ENCODE measurements at regions of chr19 and their contacts with region 1.

Region 1: GRCh38 chr19:42325273-42325895 is at the start of gene MEGF8:
- DNase-seq: peak; percentile 86 to 99 (median 97)
- ATAC-seq: peak; percentile 96
- H3K4me3 ChIP-seq: peak within 1 kb of the TSS; percentile 95
- H3K4me3 Mint-ChIP-seq: peak within 1 kb of the TSS; percentile 89 to 96 (median 94)
- H3K27ac ChIP-seq: peak within 1 kb of the TSS; percentile 84
- H3K27ac Mint-ChIP-seq: peak within 1 kb of the TSS; percentile 51 to 93 (median 83)
- H3K4me1 ChIP-seq: peaks cover 6 to 7% of the 10 kb centered on the region in 2 donors
- H3K4me1 Mint-ChIP-seq: peaks cover 13 to 29% (median 22%) of the 10 kb centered on the region in 7 donors
- H3K27me3 ChIP-seq: peaks cover 0 to 4% of the 10 kb centered on the region in 2 donors
- H3K27me3 Mint-ChIP-seq: peaks cover 6 to 33% (median 16%) of the 10 kb centered on the region in 5 donors
- total RNA-seq, gene MEGF8: 6.7 to 9.3 (median 8.6) TPM

Region 2: GRCh38 chr19:40348125-40348913 is 1977.1 kb before region 1 on chr19 and contains the starts of genes C19orf47 and PLD3:
- CTCF ChIA-PET with region 1: no interaction called
- POLR2A ChIA-PET with region 1: no interaction called
- intact Hi-C with region 1: loop called in 1 of 2 experiments (anchors 5 kb)
- DNase-seq: peak; percentile 92 to 99 (median 97)
- ATAC-seq: peak; percentile 97
- H3K4me3 ChIP-seq: peak within 1 kb of the TSS; percentile 61
- H3K4me3 Mint-ChIP-seq: peak within 1 kb of the TSS; percentile 83 to 99 (median 96)
- H3K27ac ChIP-seq: peak within 1 kb of the TSS; percentile 86
- H3K27ac Mint-ChIP-seq: peak within 1 kb of the TSS; percentile 81 to 98 (median 93)
- H3K4me1 ChIP-seq: peaks cover 7 to 14% of the 10 kb centered on the region in 2 donors
- H3K4me1 Mint-ChIP-seq: peaks cover 20 to 51% (median 44%) of the 10 kb centered on the region in 7 donors
- H3K27me3 ChIP-seq: no peaks in the 10 kb centered on the region
- H3K27me3 Mint-ChIP-seq: peaks cover 0 to 2% (median 0%) of the 10 kb centered on the region in 5 donors
- total RNA-seq, gene C19orf47: 12.6 to 20.3 (median 15.8) TPM
- total RNA-seq, gene PLD3: 75.4 to 137 (median 114) TPM

Region 3: DNA sequence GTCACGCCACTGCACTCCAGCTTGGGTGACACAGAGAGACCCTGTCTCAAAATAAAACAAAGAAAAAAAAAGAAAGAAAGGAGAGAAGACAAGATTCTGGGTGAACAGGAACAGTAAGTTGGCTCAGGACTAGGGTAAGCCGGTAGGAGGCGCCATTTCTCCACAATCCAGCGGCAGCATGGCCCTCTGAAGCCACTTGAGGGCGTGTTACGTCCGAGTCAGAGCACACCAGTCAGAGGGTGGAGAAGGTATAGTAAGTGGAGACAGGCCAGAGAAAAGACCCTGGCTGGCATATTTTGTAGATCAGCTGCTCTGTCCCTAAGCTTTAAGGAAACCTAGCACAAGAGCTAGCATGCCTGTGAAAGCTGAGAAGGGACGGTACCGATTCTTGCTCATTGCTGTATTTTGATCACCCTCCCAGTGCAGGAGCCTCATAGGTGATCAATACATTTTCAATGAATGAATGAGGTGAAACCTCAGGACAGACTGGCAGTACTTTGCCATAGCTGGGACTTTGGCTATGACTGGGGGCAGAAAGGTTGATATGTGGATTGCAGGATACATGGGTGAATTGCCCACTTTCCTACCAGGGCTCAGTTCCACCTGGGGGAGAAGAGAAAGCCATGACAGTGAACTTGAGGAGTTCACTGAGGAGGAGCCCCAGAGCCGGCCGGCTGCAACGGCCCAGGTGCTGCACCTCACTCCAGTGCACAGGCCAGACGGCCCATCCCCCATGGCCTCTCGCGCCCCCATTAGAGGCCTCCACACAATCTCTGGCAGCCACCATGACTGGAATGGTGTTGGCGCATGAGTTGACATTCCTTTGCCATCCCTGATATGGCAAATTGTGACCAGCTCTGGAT is 216.6 kb before region 1 on chr19:
- CTCF ChIA-PET with region 1: no interaction called
- POLR2A ChIA-PET with region 1: no interaction called
- intact Hi-C with region 1: loop called (anchors 1 kb)
- DNase-seq: peak; percentile 73 to 89 (median 83)
- ATAC-seq: peak; percentile 100
- H3K4me3 ChIP-seq: no peak overlapping the region
- H3K4me3 Mint-ChIP-seq: no peak overlapping the region
- H3K27ac ChIP-seq: no peak overlapping the region
- H3K27ac Mint-ChIP-seq: peak overlapping the region in 6 of 9 donors; percentile 28 to 60 (median 34)
- H3K4me1 ChIP-seq: no peaks in the 10 kb centered on the region
- H3K4me1 Mint-ChIP-seq: peaks cover 6 to 44% (median 13%) of the 10 kb centered on the region in 7 donors
- H3K27me3 ChIP-seq: no peaks in the 10 kb centered on the region
- H3K27me3 Mint-ChIP-seq: no peaks in the 10 kb centered on the region

Region 4: GRCh38 chr19:42254989-42255765 is 70.2 kb before region 1 on chr19 and contains the start of gene ERF:
- CTCF ChIA-PET with region 1: no interaction called
- POLR2A ChIA-PET with region 1: no interaction called
- intact Hi-C with region 1: loop called in 1 of 2 experiments (anchors 1 kb)
- DNase-seq: peak; percentile 90 to 98 (median 94)
- ATAC-seq: peak; percentile 90
- H3K4me3 ChIP-seq: peak within 1 kb of the TSS; percentile 96
- H3K4me3 Mint-ChIP-seq: peak within 1 kb of the TSS; percentile 42 to 99 (median 77)
- H3K27ac ChIP-seq: peak within 1 kb of the TSS; percentile 99
- H3K27ac Mint-ChIP-seq: peak within 1 kb of the TSS in 8 of 9 donors; percentile 43 to 92 (median 82)
- H3K4me1 ChIP-seq: peaks cover 20 to 29% of the 10 kb centered on the region in 2 donors
- H3K4me1 Mint-ChIP-seq: peaks cover 20 to 37% (median 30%) of the 10 kb centered on the region in 7 donors
- H3K27me3 ChIP-seq: no peaks in the 10 kb centered on the region
- H3K27me3 Mint-ChIP-seq: peaks cover 0 to 10% (median 0%) of the 10 kb centered on the region in 5 donors
- total RNA-seq, gene ERF: 42.5 to 105 (median 51.8) TPM

Region 5: GRCh38 chr19:42301656-42302203 is 23.7 kb before region 1 on chr19 and contains the start of gene PRR19:
- CTCF ChIA-PET with region 1: no interaction called
- POLR2A ChIA-PET with region 1: interaction called, 6 read pairs
- intact Hi-C with region 1: loop called (anchors 1 kb)
- DNase-seq: peak in 1 of 9 donors; percentile 21
- ATAC-seq: peak; percentile 8
- H3K4me3 ChIP-seq: peak within 1 kb of the TSS; percentile 85
- H3K4me3 Mint-ChIP-seq: peak within 1 kb of the TSS; percentile 83 to 92 (median 89)
- H3K27ac ChIP-seq: peak within 1 kb of the TSS; percentile 71
- H3K27ac Mint-ChIP-seq: peak within 1 kb of the TSS; percentile 64 to 94 (median 88)
- H3K4me1 ChIP-seq: peaks cover 11 to 16% of the 10 kb centered on the region in 2 donors
- H3K4me1 Mint-ChIP-seq: peaks cover 11 to 30% (median 23%) of the 10 kb centered on the region in 7 donors
- H3K27me3 ChIP-seq: no peaks in the 10 kb centered on the region
- H3K27me3 Mint-ChIP-seq: no peaks in the 10 kb centered on the region
- total RNA-seq, gene PRR19: 0.32 to 0.68 (median 0.38) TPM in 4 of 5 experiments, not detected in the other

Region 6: DNA sequence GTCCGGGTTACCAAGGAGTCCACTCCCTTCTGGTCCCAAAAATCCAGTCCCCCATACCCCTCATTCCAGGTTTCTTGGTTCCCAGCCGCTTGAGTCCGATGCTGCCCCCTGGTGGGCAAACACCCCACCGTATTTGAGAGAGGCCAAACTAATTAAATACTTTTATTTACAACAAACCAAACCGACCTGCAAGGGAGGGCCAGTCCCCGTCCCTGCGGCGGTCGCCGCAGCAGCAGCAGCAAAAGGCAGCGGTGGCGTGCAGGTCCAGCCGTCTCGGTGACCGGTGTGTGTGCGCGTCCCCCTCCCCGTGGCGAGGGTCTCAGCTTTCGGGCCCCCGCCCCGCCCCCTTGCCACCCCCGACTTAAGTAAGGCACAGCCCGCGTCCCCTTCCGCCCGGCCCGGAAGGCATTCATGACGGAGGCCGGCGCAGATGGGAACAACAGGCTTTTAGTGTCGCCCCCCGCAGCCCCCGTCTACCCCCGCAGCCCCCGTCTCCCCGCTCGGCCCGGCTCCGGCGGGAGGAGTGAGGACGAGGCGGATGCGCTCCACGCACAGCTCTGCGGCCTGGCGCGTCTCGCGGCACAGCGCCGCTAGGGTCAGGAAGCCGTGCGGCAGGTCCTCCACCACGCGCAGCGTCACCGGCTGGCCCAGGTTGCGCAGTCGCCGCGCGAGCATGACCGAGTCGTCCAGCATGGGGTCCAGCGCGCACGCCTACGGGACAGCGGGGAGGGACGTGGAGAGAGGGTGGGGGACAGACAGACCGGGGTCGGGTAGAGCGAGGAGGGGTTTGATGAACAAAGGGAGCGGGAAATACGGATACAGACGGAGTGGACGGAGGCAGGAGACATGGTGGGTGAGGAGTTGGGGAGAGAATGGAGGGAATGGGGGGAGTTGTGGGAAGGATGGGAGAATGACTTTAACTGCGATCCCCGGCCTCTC is 76.2 kb after region 1 on chr19:
- CTCF ChIA-PET with region 1: no interaction called
- POLR2A ChIA-PET with region 1: no interaction called
- intact Hi-C with region 1: loop called (anchors 1 to 5 kb)
- DNase-seq: peak; percentile 46 to 72 (median 64)
- ATAC-seq: peak; percentile 78
- H3K4me3 ChIP-seq: peak overlapping the region; percentile 62
- H3K4me3 Mint-ChIP-seq: peak overlapping the region; percentile 79 to 88 (median 84)
- H3K27ac ChIP-seq: peak overlapping the region; percentile 68
- H3K27ac Mint-ChIP-seq: peak overlapping the region; percentile 49 to 88 (median 81)
- H3K4me1 ChIP-seq: peaks cover 12 to 13% of the 10 kb centered on the region in 2 donors
- H3K4me1 Mint-ChIP-seq: peaks cover 25 to 51% (median 42%) of the 10 kb centered on the region in 7 donors
- H3K27me3 ChIP-seq: no peaks in the 10 kb centered on the region
- H3K27me3 Mint-ChIP-seq: no peaks in the 10 kb centered on the region

Region 7: GRCh38 chr19:42628411-42629140 is 303.2 kb after region 1 on chr19:
- CTCF ChIA-PET with region 1: no interaction called
- POLR2A ChIA-PET with region 1: no interaction called
- intact Hi-C with region 1: no loop called
- DNase-seq: no peak
- ATAC-seq: no peak
- H3K4me3 ChIP-seq: no peak overlapping the region
- H3K4me3 Mint-ChIP-seq: peak overlapping the region in 1 of 10 donors; percentile 41
- H3K27ac ChIP-seq: no peak overlapping the region
- H3K27ac Mint-ChIP-seq: peak overlapping the region in 1 of 9 donors; percentile 76
- H3K4me1 ChIP-seq: no peaks in the 10 kb centered on the region
- H3K4me1 Mint-ChIP-seq: peaks cover 0 to 18% (median 0%) of the 10 kb centered on the region in 7 donors
- H3K27me3 ChIP-seq: no peaks in the 10 kb centered on the region
- H3K27me3 Mint-ChIP-seq: peaks cover 1 to 45% (median 31%) of the 10 kb centered on the region in 5 donors

Region 8: DNA sequence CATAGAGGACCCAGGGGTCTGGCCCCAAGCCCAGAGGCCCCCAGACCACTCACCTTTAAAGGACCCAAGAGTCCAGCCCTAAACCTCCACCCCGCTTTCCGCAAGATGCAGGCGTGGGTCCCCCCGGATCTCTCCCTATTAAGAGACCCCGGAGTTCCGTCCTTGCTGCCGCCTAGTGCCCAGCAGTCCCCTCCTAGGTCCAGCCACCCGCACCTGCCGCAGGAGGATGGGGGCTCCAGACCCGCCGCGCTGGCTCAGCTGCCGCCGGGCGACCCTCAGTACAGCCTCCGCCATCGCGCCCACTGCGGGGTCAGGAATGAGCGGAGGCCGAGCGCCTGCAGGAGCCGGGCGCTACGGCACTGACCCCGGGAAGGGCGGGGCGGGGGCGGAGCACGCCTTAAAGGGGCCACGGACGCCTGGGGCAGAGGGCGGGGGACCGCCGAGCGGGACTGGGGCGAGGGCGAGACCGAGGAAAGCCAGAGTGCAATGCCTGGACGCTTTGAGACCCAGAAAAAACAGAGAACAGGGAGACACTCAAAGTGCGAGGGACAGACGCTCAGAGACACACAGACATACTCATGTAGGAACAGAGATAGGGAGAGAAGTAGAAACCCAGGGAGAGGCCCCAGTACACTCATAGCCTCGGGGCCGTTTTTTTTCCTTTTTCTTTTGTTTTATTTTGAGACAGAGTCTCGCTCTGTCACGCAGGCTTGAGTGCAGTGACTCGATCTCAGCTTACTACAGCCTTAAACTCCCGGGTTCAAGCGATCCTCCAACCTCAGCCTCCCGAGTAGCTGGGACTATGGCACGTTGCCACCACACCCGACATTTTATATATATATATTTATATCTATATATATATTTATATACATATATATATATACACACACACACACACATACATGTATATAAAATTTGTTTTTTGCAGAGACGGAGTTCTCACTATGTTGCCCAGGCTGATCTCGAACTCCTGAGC is 1201.8 kb after region 1 on chr19 and contains the start of gene ETHE1:
- CTCF ChIA-PET with region 1: no interaction called
- POLR2A ChIA-PET with region 1: no interaction called
- intact Hi-C with region 1: no loop called
- DNase-seq: peak; percentile 39 to 86 (median 50)
- ATAC-seq: peak; percentile 86
- H3K4me3 ChIP-seq: peak within 1 kb of the TSS; percentile 75
- H3K4me3 Mint-ChIP-seq: peak within 1 kb of the TSS; percentile 78 to 94 (median 84)
- H3K27ac ChIP-seq: peak within 1 kb of the TSS; percentile 81
- H3K27ac Mint-ChIP-seq: peak within 1 kb of the TSS; percentile 75 to 96 (median 86)
- H3K4me1 ChIP-seq: peaks cover 15 to 24% of the 10 kb centered on the region in 2 donors
- H3K4me1 Mint-ChIP-seq: peaks cover 18 to 38% (median 25%) of the 10 kb centered on the region in 7 donors
- H3K27me3 ChIP-seq: no peaks in the 10 kb centered on the region
- H3K27me3 Mint-ChIP-seq: no peaks in the 10 kb centered on the region
- total RNA-seq, gene ETHE1: 20.3 to 58.6 (median 23.9) TPM

Measured in naive thymus-derived CD4-positive, alpha-beta T cell (primary cell).